WTC11 (cell line): ENCODE measurements at regions of chr14 and their contacts with region 1.

Region 1: GRCh38 chr14:51382506-51382905 is 142.5 kb downstream of the TMX1 start:
- DNase-seq: no peak
- ATAC-seq: no peak
- H3K4me3 Mint-ChIP-seq: no peak overlapping the region
- H3K27ac Mint-ChIP-seq: no peak overlapping the region
- H3K4me1 Mint-ChIP-seq: no peaks in the 10 kb centered on the region
- H3K27me3 Mint-ChIP-seq: no peaks in the 10 kb centered on the region
- CTCF ChIP-seq: no peak

Region 2: DNA sequence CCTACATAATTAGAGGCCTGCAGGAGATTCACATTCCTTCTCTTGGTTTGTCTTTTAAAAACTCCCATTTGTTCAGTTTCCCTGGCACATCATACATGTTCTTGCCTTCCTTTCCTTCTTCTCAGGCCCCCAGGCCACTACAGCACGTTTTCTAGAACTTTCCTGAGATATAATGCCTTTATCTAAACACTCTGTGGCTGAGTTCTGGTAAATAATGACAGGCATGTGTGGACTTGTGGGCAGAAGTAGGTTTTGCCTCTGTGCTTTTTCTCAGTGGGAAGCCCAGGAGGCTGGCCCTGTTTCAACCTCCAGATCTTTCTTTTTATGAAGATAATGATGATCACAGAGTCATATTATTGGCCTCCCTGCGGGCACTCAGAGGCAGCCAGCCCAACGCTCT is 25.3 kb before region 1 on chr14:
- CTCF ChIA-PET with region 1: no interaction called
- POLR2A ChIA-PET with region 1: no interaction called
- DNase-seq: no peak
- ATAC-seq: no peak
- H3K4me3 Mint-ChIP-seq: no peak overlapping the region
- H3K27ac Mint-ChIP-seq: no peak overlapping the region
- H3K4me1 Mint-ChIP-seq: 0 out of 2 replicates have a peak, but pooled peaks cover 3% of the 10 kb centered on the region
- H3K27me3 Mint-ChIP-seq: no peaks in the 10 kb centered on the region
- CTCF ChIP-seq: no peak

Region 3: DNA sequence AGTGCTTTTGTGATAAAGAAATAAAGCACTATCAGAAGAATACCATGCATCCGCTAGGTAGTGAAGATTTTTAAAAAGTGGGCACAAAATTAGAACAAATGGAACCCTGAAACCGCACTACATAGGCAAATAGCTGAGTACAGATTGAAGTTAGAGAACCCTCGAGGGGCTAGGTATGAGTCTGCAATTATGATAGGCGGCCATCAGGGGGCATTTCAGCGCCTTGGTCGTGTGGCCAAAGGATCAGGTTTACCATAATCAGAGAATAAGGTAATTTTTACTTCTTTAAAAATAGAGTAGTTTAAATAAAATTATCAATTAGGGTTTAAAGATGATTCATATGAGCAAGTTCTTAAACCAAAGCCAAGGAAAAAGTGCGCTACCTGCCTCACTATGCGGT is 12.7 kb before region 1 on chr14:
- CTCF ChIA-PET with region 1: interaction called, 16 read pairs
- POLR2A ChIA-PET with region 1: no interaction called
- DNase-seq: peak; percentile 41
- ATAC-seq: peak; percentile 67; the same call in 1 of the 2 replicates
- H3K4me3 Mint-ChIP-seq: no peak overlapping the region
- H3K27ac Mint-ChIP-seq: no peak overlapping the region
- H3K4me1 Mint-ChIP-seq: no peaks in the 10 kb centered on the region
- H3K27me3 Mint-ChIP-seq: no peaks in the 10 kb centered on the region
- CTCF ChIP-seq: peak; percentile 59

Region 4: GRCh38 chr14:51410897-51411296 is 28.4 kb after region 1 on chr14:
- CTCF ChIA-PET with region 1: no interaction called
- POLR2A ChIA-PET with region 1: no interaction called
- DNase-seq: no peak
- ATAC-seq: no peak
- H3K4me3 Mint-ChIP-seq: no peak overlapping the region
- H3K27ac Mint-ChIP-seq: no peak overlapping the region; the same call in 1 of the 2 replicates
- H3K4me1 Mint-ChIP-seq: peaks cover 11% of the 10 kb centered on the region
- H3K27me3 Mint-ChIP-seq: peaks cover 9% of the 10 kb centered on the region; the same call in 1 of the 2 replicates
- CTCF ChIP-seq: no peak